Psoas muscle (tissue), 8 donors: ENCODE measurements at regions of chr7 and their contacts with region 1.

Region 1: GRCh38 chr7:27793780-27794179 is 53.8 kb downstream of the TAX1BP1 start:
- DNase-seq: no peak
- ATAC-seq: no peak
- H3K4me3 ChIP-seq: no peak overlapping the region
- H3K27ac ChIP-seq: no peak overlapping the region
- H3K4me1 ChIP-seq: no peaks in the 10 kb centered on the region
- H3K27me3 ChIP-seq: no peaks in the 10 kb centered on the region
- CTCF ChIP-seq: no peak

Region 2: DNA sequence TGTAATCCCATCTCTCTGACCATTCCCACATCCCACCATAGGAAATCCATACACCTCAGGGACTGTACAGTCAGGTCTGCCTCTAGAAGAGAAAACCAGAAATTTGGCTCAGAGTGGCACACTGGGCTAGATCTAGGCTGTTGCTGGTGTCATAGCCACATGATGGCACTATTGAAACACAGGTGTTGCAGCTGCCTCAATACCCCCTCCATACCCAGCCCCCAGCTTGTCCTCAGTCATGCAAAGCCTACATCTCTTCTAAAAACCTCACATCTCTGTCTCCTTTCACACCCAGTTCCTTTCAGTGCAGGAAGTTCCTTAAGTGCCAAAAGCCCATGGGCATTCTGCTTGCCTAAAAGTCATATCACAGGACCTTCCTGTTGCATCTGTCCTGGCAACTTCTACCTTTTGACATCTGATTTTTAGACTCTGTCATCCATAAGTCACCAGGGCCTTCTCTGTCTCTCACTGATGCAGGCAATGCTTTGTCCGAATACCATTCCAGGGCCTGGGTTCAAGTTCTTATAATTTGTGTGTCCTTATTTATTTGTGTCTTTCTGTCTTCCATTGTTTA is 104.1 kb before region 1 on chr7:
- intact Hi-C with region 1: no loop called
- DNase-seq: no peak
- ATAC-seq: peak in 3 of 4 donors; percentile 36 to 57 (median 54)
- H3K4me3 ChIP-seq: no peak overlapping the region
- H3K27ac ChIP-seq: no peak overlapping the region
- H3K4me1 ChIP-seq: no peaks in the 10 kb centered on the region
- H3K27me3 ChIP-seq: no peaks in the 10 kb centered on the region
- CTCF ChIP-seq: peak; percentile 19

Region 3: DNA sequence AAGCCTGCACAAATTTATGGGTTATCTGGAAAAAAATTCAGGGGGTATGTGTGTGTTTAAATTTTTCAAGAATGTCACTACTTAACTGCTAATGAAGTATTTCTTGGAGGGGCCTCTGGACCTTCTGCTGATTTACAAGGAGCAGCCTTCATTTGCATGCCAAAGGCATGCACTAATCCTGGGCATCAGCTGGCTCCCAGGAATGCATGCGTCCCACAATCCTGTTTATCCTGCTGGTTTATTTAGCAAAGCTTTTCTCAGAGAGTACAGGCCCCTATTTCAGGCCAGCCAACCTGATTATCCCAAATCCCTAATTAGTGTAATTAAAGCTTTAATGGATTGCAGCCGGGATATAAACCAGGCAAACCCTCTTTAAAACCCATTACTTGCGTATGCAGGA is 116.5 kb after region 1 on chr7:
- intact Hi-C with region 1: loop called in 1 of 2 experiments (anchors 5 kb)
- DNase-seq: no peak
- ATAC-seq: no peak
- H3K4me3 ChIP-seq: no peak overlapping the region
- H3K27ac ChIP-seq: no peak overlapping the region
- H3K4me1 ChIP-seq: no peaks in the 10 kb centered on the region
- H3K27me3 ChIP-seq: no peaks in the 10 kb centered on the region
- CTCF ChIP-seq: no peak

Region 4: DNA sequence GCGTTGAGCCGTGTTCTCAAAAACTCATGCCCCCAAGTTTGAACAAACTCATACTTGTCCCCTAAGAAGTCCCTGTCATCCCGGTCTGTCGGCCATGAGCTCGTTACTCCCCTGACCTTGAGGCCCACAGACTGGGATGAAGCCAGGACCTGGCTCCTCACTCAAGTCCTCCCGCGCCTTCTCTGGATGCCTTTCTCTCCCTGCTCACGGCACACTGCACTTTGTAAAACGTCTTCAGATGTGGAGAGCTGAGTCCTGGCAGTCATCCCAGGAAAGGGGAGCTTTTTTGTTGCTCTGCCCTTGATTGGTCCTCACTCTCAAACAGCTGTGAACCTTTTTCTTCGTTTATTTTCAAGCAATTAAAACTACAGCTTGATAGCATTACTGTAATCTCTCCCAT is 276.0 kb after region 1 on chr7:
- intact Hi-C with region 1: no loop called
- DNase-seq: peak; percentile 49 to 62
- ATAC-seq: peak in 3 of 4 donors; percentile 56 to 63 (median 62)
- H3K4me3 ChIP-seq: no peak overlapping the region
- H3K27ac ChIP-seq: peak overlapping the region; percentile 20
- H3K4me1 ChIP-seq: peaks cover 19% of the 10 kb centered on the region
- H3K27me3 ChIP-seq: no peaks in the 10 kb centered on the region
- CTCF ChIP-seq: no peak

Region 5: GRCh38 chr7:28102778-28103177 is 309.0 kb after region 1 on chr7:
- intact Hi-C with region 1: no loop called
- DNase-seq: peak; percentile 57 to 59
- ATAC-seq: peak; percentile 63 to 81 (median 68)
- H3K4me3 ChIP-seq: no peak overlapping the region
- H3K27ac ChIP-seq: no peak overlapping the region
- H3K4me1 ChIP-seq: peaks cover 49% of the 10 kb centered on the region
- H3K27me3 ChIP-seq: no peaks in the 10 kb centered on the region
- CTCF ChIP-seq: no peak